ENCODE measurements at regions of chr9 and their contacts with region 1.

Region 1: DNA sequence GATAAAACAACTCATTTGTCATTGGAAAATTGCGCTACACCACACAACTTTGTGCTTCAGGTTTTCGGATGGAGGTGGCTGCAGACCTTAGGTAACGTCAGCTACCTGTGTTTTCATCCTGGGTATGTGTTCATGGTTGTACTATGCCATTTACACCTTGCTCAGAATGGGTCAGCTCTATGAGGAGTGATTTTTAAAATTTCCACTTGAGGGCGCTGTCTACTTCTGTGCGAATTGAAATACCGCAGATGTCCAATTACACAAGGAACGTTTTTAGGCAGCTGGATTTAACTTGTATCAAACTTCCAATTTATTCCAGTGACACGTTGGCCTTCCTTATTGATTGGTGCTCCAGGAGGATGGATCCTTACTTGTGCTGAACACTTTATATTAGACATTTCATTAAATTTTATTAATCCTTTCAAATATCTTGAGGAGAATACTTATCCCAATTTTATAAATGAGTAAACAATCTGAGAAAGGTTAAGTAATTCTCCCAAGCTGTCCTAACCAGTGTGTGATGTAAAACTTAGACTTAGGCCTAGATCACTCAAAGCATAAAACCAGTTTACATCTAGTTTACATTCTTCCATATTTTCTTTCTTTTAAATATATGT is 23.4 kb downstream of the DMRTA1 start:
- DNase-seq: peak; percentile 30 to 49
- ATAC-seq: peak; percentile 83 to 93
- H3K4me3 ChIP-seq: no peak overlapping the region
- H3K27ac ChIP-seq: no peak overlapping the region
- H3K4me1 ChIP-seq: no peaks in the 10 kb centered on the region
- CTCF ChIP-seq: peak; percentile 82
- EP300 ChIP-seq: no peak
- POLR2A ChIP-seq: no peak
- RAD21 ChIP-seq: peak; percentile 73 to 83

Region 2: DNA sequence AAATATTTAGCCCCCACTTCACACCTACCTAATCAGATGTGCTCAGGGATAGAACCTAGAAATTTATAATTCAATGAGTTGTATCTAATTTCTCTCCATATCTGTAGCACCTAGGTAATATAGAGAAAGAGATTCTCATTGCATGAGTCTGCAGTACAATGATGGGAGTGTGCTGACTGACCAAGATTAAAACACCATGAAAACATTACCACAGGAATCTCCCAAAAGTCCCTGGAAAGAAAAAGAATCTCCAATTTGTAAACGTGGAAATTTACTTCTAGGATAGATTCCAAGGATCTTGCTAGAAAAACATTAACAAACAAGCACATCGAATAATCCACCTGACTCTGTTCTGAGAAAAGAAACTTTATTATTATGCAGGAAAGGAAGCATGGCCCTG is 68.4 kb before region 1 on chr9:
- CTCF ChIA-PET with region 1: no interaction called
- POLR2A ChIA-PET with region 1: no interaction called
- DNase-seq: no peak
- ATAC-seq: no peak
- H3K4me3 ChIP-seq: no peak overlapping the region
- H3K27ac ChIP-seq: no peak overlapping the region
- H3K4me1 ChIP-seq: no peaks in the 10 kb centered on the region
- CTCF ChIP-seq: no peak
- EP300 ChIP-seq: no peak
- POLR2A ChIP-seq: no peak
- RAD21 ChIP-seq: no peak

Region 3: GRCh38 chr9:22452415-22453010 is 17.5 kb before region 1 on chr9:
- CTCF ChIA-PET with region 1: interaction called, 11 read pairs
- POLR2A ChIA-PET with region 1: no interaction called
- DNase-seq: peak; percentile 6 to 38
- ATAC-seq: peak in 1 of 2 experiments; percentile 66; a peak in 3 of 6 replicates
- H3K4me3 ChIP-seq: no peak overlapping the region
- H3K27ac ChIP-seq: no peak overlapping the region
- H3K4me1 ChIP-seq: peaks cover 20% of the 10 kb centered on the region; the same call in 2 of the 3 replicates
- CTCF ChIP-seq: peak; percentile 94
- EP300 ChIP-seq: no peak
- POLR2A ChIP-seq: no peak
- RAD21 ChIP-seq: peak; percentile 82 to 87

Region 4: GRCh38 chr9:22483528-22484070 is 13.6 kb after region 1 on chr9:
- CTCF ChIA-PET with region 1: interaction called, 11 read pairs
- POLR2A ChIA-PET with region 1: no interaction called
- DNase-seq: no peak
- ATAC-seq: no peak
- H3K4me3 ChIP-seq: no peak overlapping the region
- H3K27ac ChIP-seq: no peak overlapping the region
- H3K4me1 ChIP-seq: no peaks in the 10 kb centered on the region
- CTCF ChIP-seq: no peak
- EP300 ChIP-seq: no peak
- POLR2A ChIP-seq: no peak
- RAD21 ChIP-seq: no peak